MCF 10A (cell line): ENCODE measurements at regions of chr2 and their contacts with region 1.

Region 1: DNA sequence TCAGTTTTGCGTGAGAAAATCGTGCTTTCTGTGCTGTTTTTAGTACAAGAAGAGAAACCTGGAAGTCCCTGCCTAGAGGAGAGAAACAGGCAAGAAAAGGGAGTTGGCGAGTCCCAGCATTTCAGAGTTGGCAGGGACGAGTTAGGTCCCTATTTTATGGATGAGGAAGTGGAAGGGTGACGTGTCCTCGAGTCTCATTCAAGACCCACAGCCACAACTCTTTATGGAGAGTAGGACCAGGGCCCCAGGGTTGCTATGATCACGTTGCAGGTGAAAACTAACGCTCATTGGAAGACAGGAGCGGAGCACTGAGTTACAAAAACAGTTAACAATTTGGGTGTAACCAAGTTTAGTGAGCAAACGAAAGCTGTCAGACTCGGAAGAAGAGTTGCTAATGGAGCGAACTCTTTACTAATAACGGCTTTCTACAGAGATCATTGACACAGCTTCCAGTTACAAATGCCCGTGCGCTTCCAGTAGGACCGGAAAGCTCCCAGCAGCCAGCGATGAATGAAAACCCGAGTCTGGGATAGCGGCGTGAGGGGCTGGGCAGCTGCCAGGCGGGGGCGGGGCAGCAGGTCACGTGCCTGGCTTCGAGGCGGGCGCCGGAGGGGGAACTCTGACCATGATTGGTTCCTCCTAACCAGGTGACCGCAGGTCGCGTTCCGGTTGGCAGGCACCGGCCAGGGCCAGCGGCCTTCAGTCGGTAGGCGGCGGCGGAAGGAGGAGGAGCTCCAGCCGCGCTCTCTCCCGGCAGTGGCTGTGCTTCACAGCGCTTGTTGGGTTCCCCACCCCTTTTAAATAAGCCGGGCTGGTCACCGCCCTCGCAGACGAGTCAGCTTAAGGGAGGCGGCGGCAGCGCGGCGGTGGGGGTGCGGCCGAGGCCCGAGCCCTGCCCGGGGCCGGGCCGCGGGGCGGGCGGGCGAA is at the start of gene CCNYL1:
- DNase-seq: peak; percentile 98
- H3K4me3 Mint-ChIP-seq: peak within 1 kb of the TSS; percentile 99
- H3K27ac Mint-ChIP-seq: peak within 1 kb of the TSS; percentile 96
- H3K4me1 Mint-ChIP-seq: peaks cover 17% of the 10 kb centered on the region
- H3K27me3 Mint-ChIP-seq: no peaks in the 10 kb centered on the region
- CTCF ChIP-seq: no peak
- total RNA-seq, gene CCNYL1: 19.7 and 23.3 TPM in 2 replicates

Region 2: GRCh38 chr2:207617011-207617691 is 93.9 kb before region 1 on chr2:
- CTCF ChIA-PET with region 1: interaction called, 7 read pairs
- POLR2A ChIA-PET with region 1: interaction called, 3 read pairs
- intact Hi-C with region 1: loop called (anchors 2 kb)
- DNase-seq: peak; percentile 58
- H3K4me3 Mint-ChIP-seq: peak overlapping the region; percentile 43
- H3K27ac Mint-ChIP-seq: peak overlapping the region; percentile 86
- H3K4me1 Mint-ChIP-seq: peaks cover 20% of the 10 kb centered on the region
- H3K27me3 Mint-ChIP-seq: no peaks in the 10 kb centered on the region
- CTCF ChIP-seq: no peak

Region 3: GRCh38 chr2:207632575-207633493 is 78.2 kb before region 1 on chr2:
- CTCF ChIA-PET with region 1: interaction called, 4 read pairs
- POLR2A ChIA-PET with region 1: interaction called, 54 read pairs
- intact Hi-C with region 1: no loop called
- DNase-seq: peak; percentile 92
- H3K4me3 Mint-ChIP-seq: peak overlapping the region; percentile 47
- H3K27ac Mint-ChIP-seq: peak overlapping the region; percentile 61
- H3K4me1 Mint-ChIP-seq: peaks cover 35% of the 10 kb centered on the region
- H3K27me3 Mint-ChIP-seq: no peaks in the 10 kb centered on the region
- CTCF ChIP-seq: no peak

Region 4: GRCh38 chr2:207734264-207734635 is 23.2 kb after region 1 on chr2:
- CTCF ChIA-PET with region 1: interaction called, 10 read pairs
- POLR2A ChIA-PET with region 1: interaction called, 57 read pairs
- intact Hi-C with region 1: no loop called
- DNase-seq: peak; percentile 43
- H3K4me3 Mint-ChIP-seq: no peak overlapping the region
- H3K27ac Mint-ChIP-seq: no peak overlapping the region
- H3K4me1 Mint-ChIP-seq: peaks cover 5% of the 10 kb centered on the region
- H3K27me3 Mint-ChIP-seq: no peaks in the 10 kb centered on the region
- CTCF ChIP-seq: peak; percentile 26